ENCODE measurements at regions of chr5 and their contacts with region 1.

Region 1: DNA sequence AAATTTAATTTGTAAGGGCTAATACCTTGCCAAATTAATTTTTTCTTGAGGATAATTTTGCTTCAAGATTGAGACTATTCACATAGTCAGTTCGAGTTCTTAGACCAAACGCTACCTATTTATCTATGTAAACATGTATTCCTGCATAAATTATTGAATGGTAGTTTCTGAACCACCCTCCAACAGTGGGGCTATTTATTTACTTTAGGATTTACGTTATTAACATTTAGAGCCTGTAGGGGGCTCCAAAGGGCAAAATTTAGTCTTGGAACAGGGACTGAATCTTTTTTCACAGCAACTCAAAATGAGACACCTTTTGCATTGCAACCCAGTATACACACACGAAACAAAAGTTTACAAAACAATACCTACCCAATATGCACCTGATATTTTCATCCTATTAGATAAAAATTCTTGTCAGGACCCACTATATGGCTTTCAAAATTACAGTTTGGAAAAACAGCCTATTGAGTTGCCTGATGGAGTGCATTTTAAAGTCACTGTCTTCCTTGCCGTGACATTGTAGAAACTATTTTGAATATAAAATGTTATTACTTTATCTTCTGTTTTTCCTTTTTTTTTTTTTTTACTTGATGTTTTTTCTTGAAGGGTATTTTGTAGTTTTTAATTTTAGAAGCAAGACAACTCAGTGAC is 47.1 kb upstream of the POU4F3 start:
- DNase-seq: no peak
- H3K4me3 ChIP-seq: no peak overlapping the region
- CTCF ChIP-seq: no peak
- POLR2A ChIP-seq: no peak

Region 2: GRCh38 chr5:146426853-146427618 is 135.5 kb after region 1 on chr5:
- intact Hi-C with region 1: loop called (anchors 10 kb)
- DNase-seq: no peak
- H3K4me3 ChIP-seq: no peak overlapping the region
- CTCF ChIP-seq: peak in 1 of 3 donors; percentile 32
- POLR2A ChIP-seq: no peak

Measured in lower leg skin (tissue), 4 donors.